HEK293 (cell line): ENCODE measurements at regions of chr10 and their contacts with region 1.

Region 1: GRCh38 chr10:56286096-56286495 is 75.0 kb downstream of the ZWINT start:
- H3K4me3 ChIP-seq: no peak overlapping the region
- H3K27ac ChIP-seq: no peak overlapping the region
- H3K4me1 ChIP-seq: no peaks in the 10 kb centered on the region
- CTCF ChIP-seq: no peak

Region 2: DNA sequence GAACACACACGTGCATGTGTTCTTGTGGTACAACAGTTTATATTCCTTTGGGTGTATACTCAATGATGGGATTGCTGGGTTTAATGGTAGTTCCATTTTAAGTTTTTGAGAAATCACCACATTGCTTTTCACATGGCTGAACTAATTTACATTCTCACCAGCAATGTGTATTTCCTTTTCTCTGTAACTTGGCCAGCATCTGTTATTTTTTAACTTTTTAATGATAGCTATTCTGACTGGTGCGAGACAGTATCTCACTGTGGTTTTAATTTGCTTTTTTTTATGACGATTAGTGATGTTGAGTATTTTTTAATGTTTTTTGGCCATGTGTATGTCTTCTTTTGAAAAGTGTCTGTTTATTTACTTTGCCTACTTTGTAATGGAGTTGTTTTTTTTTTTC is 181.6 kb before region 1 on chr10:
- CTCF ChIA-PET with region 1: no interaction called
- POLR2A ChIA-PET with region 1: no interaction called
- H3K4me3 ChIP-seq: no peak overlapping the region
- H3K27ac ChIP-seq: no peak overlapping the region
- H3K4me1 ChIP-seq: no peaks in the 10 kb centered on the region
- CTCF ChIP-seq: no peak

Region 3: DNA sequence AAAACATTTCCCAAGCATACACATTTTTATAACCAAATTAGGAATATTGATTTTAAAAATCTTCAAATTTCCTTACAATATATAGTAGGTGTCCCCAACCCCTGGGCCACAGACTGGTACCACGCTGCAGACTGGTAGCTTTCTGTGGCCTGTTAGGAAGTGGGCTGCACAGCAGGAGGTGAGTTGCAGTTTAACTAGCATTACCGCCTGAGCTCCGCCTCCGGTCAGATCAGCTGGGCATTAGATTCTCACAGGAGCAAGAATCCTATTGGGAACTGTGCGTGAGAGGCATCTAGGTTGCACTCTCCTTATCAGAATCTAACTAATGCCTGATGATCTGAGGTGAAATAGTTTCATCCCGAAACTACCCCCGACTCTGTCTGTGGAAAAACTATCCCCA is 12.8 kb after region 1 on chr10:
- CTCF ChIA-PET with region 1: no interaction called
- POLR2A ChIA-PET with region 1: no interaction called
- H3K4me3 ChIP-seq: no peak overlapping the region
- H3K27ac ChIP-seq: no peak overlapping the region
- H3K4me1 ChIP-seq: no peaks in the 10 kb centered on the region
- CTCF ChIP-seq: no peak

Region 4: GRCh38 chr10:56449770-56450169 is 163.7 kb after region 1 on chr10:
- CTCF ChIA-PET with region 1: no interaction called
- POLR2A ChIA-PET with region 1: interaction called, 10 read pairs
- H3K4me3 ChIP-seq: no peak overlapping the region
- H3K27ac ChIP-seq: no peak overlapping the region
- H3K4me1 ChIP-seq: no peaks in the 10 kb centered on the region
- CTCF ChIP-seq: no peak